ENCODE measurements at regions of chr5 and their contacts with region 1.

Region 1: DNA sequence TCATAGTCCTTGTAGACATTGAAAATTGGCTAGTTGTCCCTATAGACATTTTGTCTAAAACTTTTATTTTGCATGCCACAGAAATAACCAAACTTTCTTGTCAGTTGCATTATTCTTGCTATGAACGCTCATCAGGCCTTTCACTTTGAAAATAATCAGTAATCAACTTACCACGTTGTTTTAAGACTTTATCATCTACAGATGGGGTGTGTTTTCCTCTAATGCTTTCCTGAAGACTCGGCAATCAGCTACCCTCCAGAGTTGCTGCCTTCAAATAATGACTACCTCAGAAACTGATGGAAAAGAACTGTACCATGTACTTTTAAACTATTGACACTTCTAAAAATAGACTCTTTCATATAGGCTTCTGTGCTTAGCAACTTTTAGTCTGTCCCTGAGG is 33.5 kb upstream of the HSPB3 start:
- DNase-seq: no peak
- ATAC-seq: no peak
- H3K4me3 ChIP-seq: no peak overlapping the region
- H3K27ac ChIP-seq: no peak overlapping the region
- H3K4me1 ChIP-seq: no peaks in the 10 kb centered on the region
- H3K27me3 ChIP-seq: no peaks in the 10 kb centered on the region
- CTCF ChIP-seq: no peak
- POLR2A ChIP-seq: no peak

Region 2: DNA sequence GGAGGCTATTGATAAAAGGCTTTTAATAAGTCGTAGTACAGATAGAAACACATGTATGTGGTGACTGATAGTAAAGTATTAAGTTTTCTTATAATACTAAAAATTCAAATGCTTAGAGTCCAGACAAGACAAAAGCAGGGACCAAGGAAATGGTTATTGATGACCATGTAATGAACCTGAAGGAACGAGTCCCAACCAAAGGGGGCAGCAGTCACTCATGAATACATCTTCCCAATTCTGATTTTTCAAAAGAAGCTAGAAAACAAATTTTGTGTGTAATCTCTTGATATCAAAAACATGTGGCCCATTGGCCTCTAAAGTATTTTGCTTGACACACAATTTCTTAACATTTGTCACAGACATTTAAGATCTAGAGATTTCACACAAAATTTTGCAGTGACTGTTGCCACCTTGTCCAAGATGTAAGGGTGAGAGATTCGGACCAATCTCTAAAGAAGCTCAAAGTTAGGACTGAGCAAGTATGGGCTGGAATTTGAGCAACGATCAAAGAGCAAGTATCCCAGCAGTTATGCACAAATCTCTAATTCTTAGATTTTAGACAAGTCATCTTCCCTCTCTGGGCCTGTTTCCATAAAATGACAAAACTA is 178.4 kb before region 1 on chr5:
- intact Hi-C with region 1: loop called (anchors 10 kb)
- DNase-seq: peak in 3 of 4 donors; percentile 31 to 54 (median 36)
- ATAC-seq: peak; percentile 45
- H3K4me3 ChIP-seq: no peak overlapping the region
- H3K27ac ChIP-seq: no peak overlapping the region
- H3K4me1 ChIP-seq: no peaks in the 10 kb centered on the region
- H3K27me3 ChIP-seq: no peaks in the 10 kb centered on the region
- CTCF ChIP-seq: peak; percentile 41 to 72 (median 67)
- POLR2A ChIP-seq: no peak

Measured in body of pancreas (tissue), 4 donors.